Astrocyte of the cerebellum (primary cell): ENCODE measurements at regions of chr7 and their contacts with region 1.

Region 1: DNA sequence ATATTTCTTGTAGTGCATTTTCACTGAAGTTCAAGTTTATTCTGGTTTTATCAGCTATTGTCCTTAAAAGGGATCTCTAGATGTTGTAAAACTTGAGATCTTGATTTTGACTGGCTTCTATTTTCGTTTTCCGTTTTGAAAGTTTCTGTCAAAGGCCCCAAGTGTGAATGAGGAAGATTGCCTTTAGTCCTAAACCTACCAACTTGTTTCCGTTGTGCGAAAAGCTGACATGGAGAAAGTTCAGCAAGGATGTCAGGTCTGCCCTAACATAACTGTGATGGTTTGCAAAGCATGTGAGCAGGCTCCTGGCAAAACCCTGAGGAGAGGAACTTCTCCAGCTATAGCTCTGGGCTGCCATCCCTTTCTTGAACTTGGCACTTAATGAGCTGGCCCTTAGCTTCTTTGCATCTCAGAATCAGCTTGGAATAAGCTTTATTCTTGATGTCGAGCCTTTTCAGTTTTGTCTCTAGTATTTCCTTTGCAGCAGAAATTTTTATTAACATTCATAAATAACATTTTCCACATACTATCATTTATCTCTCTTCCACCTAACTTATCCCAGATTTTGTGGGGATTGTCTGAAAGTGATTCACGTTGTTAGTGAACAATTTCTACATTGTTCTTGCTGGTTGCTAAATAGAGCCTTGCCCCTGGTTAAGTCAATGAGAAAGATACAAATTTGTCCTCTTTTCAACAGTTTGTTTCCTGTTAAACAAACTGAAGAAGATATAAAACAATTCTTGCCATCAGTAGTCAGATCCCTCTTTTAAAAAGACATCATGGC is 559.4 kb downstream of the SUGCT start:
- DNase-seq: no peak
- H3K4me3 ChIP-seq: no peak overlapping the region
- CTCF ChIP-seq: no peak

Region 2: GRCh38 chr7:40629891-40630290 is 64.3 kb before region 1 on chr7:
- in situ Hi-C with region 1: no loop called
- DNase-seq: no peak
- H3K4me3 ChIP-seq: no peak overlapping the region
- CTCF ChIP-seq: no peak

Region 3: GRCh38 chr7:40786909-40787308 is 92.7 kb after region 1 on chr7:
- in situ Hi-C with region 1: loop called (anchors 5 kb)
- DNase-seq: no peak
- H3K4me3 ChIP-seq: no peak overlapping the region
- CTCF ChIP-seq: no peak

Region 4: GRCh38 chr7:40843338-40843985 is 149.2 kb after region 1 on chr7:
- in situ Hi-C with region 1: no loop called
- DNase-seq: no peak
- H3K4me3 ChIP-seq: no peak overlapping the region
- CTCF ChIP-seq: no peak